ENCODE measurements at regions of chr6 and their contacts with region 1.

Region 1: DNA sequence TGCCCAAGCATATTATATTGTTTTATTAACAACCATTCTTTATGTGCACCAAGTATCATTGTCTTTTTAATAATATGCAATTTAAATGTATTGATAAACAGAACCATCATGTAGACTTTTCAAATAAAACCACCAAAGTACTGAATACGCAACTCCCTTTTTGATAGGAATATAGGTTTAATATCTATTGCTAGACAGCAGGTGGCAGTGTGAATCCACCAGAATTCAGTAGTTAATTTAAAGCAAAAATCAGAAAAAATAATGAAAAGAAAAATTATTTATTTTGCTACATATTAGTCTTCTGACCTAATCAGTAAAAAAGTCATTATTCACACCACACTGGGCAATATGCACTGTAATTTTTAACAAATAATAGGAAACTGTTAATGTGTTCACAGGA is 143.7 kb downstream of the KLHL32 start:
- DNase-seq: peak in 4 of 14 experiments; percentile 5 to 34 (median 15)
- ATAC-seq: no peak
- H3K4me3 ChIP-seq: no peak overlapping the region
- H3K4me3 Mint-ChIP-seq: no peak overlapping the region
- H3K27ac ChIP-seq: no peak overlapping the region
- H3K27ac Mint-ChIP-seq: no peak overlapping the region
- H3K4me1 ChIP-seq: no peaks in the 10 kb centered on the region
- H3K4me1 Mint-ChIP-seq: no peaks in the 10 kb centered on the region
- H3K27me3 ChIP-seq: no peaks in the 10 kb centered on the region
- H3K27me3 Mint-ChIP-seq: no peaks in the 10 kb centered on the region
- CTCF ChIP-seq: peak; percentile 39

Region 2: GRCh38 chr6:96542702-96543101 is 525.5 kb before region 1 on chr6:
- CTCF ChIA-PET with region 1: no interaction called
- POLR2A ChIA-PET with region 1: no interaction called
- intact Hi-C with region 1: loop called in 1 of 2 experiments (anchors 5 kb)
- DNase-seq: peak in 3 of 14 experiments; percentile 25 to 35 (median 28)
- ATAC-seq: peak; percentile 44
- H3K4me3 ChIP-seq: no peak overlapping the region
- H3K4me3 Mint-ChIP-seq: no peak overlapping the region
- H3K27ac ChIP-seq: no peak overlapping the region
- H3K27ac Mint-ChIP-seq: no peak overlapping the region
- H3K4me1 ChIP-seq: no peaks in the 10 kb centered on the region
- H3K4me1 Mint-ChIP-seq: no peaks in the 10 kb centered on the region
- H3K27me3 ChIP-seq: no peaks in the 10 kb centered on the region
- H3K27me3 Mint-ChIP-seq: no peaks in the 10 kb centered on the region
- CTCF ChIP-seq: peak; percentile 36